ENCODE measurements at regions of chrX and their contacts with region 1.

Region 1: DNA sequence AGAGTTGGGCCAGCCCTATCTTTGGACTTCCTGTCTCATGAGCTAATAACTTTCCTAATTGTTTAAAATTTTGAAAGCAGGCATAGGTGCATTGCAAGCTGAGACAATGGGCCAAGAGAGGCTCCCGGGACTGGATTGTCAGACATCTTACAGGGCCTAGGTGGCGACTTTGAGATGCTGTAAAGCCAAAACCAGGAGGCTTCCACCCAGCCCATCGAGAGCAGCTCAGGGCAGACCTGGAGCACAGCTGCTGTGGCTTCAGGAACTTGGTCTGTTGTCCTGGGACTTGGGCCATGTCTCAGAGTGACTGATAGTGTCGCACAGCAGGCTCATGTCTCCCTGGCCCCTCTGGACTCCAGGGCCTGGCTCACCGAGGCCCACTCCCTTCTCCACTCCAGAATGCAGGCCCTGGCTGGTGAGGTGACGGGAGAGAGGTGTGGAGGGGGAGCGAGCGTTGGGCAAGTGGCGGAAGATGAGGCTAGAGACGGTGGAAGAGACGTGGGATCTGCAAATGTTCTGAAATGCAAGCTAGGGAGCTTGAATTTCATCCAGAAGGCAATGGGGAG is 24.1 kb upstream of the MTM1 start:
- DNase-seq: peak; percentile 24
- H3K4me3 ChIP-seq: no peak overlapping the region
- H3K27ac ChIP-seq: no peak overlapping the region
- H3K4me1 ChIP-seq: peaks cover 0 to 18% (median 6%) of the 10 kb centered on the region in 4 donors
- H3K27me3 ChIP-seq: no peaks in the 10 kb centered on the region
- CTCF ChIP-seq: no peak
- EP300 ChIP-seq: no peak
- POLR2A ChIP-seq: no peak

Region 2: GRCh38 chrX:150324035-150324728 is 220.1 kb before region 1 on chrX:
- in situ Hi-C with region 1: no loop called
- intact Hi-C with region 1: no loop called
- DNase-seq: no peak
- H3K4me3 ChIP-seq: no peak overlapping the region
- H3K27ac ChIP-seq: no peak overlapping the region
- H3K4me1 ChIP-seq: no peaks in the 10 kb centered on the region
- H3K27me3 ChIP-seq: no peaks in the 10 kb centered on the region
- CTCF ChIP-seq: no peak
- EP300 ChIP-seq: no peak
- POLR2A ChIP-seq: no peak

Region 3: DNA sequence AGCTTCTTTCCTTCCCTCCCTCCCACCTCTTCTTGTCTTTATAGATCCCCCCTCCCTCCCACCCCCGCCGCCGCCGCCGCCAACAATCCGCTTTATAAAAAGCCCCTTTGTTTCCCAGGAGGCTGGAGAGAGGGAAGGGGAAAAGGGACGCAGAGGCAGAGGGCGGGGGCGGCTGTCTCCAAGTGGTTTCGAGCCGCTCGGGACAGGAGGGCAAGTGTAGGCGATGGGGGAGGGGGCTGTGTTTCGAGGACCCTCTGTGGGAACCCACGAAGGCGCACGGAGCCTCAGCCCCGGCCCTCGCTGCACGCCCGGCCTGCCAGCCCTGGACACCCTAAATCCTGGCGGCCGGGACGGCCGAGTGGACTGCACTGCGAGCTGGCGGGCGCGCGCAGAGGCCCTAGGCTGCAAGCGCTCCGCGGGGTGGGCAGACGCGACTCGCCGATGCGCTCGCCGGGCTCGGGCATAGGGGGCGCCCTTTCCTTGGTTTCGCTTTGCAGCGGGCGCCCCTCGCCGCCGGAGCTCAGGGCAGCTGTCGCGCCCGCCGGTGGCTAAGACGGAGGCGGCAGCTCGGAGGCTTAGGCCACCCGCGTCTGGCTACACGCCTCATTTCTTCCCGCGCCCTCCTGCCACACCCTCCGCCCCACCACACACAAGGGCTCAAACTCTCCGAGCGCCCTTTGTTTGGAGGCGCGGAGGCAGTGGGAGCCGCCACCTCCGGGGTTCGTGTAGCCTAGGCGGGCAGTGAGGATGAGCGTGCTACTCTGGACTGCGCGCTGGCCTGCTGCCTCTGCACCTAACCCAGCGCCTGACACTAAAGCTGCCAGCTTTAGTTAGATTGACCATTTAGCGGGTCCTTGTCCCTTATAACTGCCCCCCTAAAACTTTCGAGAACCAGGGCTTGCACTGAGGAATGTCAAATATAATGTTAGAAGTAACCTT is 179.0 kb before region 1 on chrX:
- in situ Hi-C with region 1: no loop called
- intact Hi-C with region 1: loop called (anchors 5 kb)
- DNase-seq: peak; percentile 65
- H3K4me3 ChIP-seq: peak overlapping the region; percentile 42 to 68 (median 43)
- H3K27ac ChIP-seq: peak overlapping the region; percentile 79 to 88 (median 85)
- H3K4me1 ChIP-seq: peaks cover 0 to 28% (median 9%) of the 10 kb centered on the region in 4 donors
- H3K27me3 ChIP-seq: peaks cover 34% of the 10 kb centered on the region
- CTCF ChIP-seq: peak; percentile 31 to 43 (median 42)
- EP300 ChIP-seq: no peak
- POLR2A ChIP-seq: peak; percentile 17

Measured in transverse colon (tissue), 4 donors.